Natural killer cell (primary cell): ENCODE measurements at regions of chr12 and their contacts with region 1.

Region 1: GRCh38 chr12:55996715-55997534 is at the start of gene SUOX:
- DNase-seq: peak; percentile 39 to 57
- ATAC-seq: peak; percentile 93
- H3K4me3 ChIP-seq: peak within 1 kb of the TSS; percentile 42
- H3K4me3 Mint-ChIP-seq: peak within 1 kb of the TSS; percentile 89
- H3K27ac ChIP-seq: peak within 1 kb of the TSS; percentile 15
- H3K27ac Mint-ChIP-seq: peak within 1 kb of the TSS; percentile 65 to 84
- H3K4me1 ChIP-seq: peaks cover 21% of the 10 kb centered on the region
- H3K4me1 Mint-ChIP-seq: peaks cover 14 to 20% of the 10 kb centered on the region in 2 donors
- H3K27me3 ChIP-seq: no peaks in the 10 kb centered on the region
- H3K27me3 Mint-ChIP-seq: no peaks in the 10 kb centered on the region
- CTCF ChIP-seq: no peak
- total RNA-seq, gene SUOX: 11.0 to 15.9 (median 14.6) TPM

Region 2: GRCh38 chr12:56029666-56030293 is 32.9 kb after region 1 on chr12:
- intact Hi-C with region 1: loop called (anchors 2 kb)
- DNase-seq: peak in 1 of 2 donors; percentile 73
- ATAC-seq: peak in 2 of 3 donors; percentile 44 to 69
- H3K4me3 ChIP-seq: no peak overlapping the region
- H3K4me3 Mint-ChIP-seq: no peak overlapping the region
- H3K27ac ChIP-seq: no peak overlapping the region
- H3K27ac Mint-ChIP-seq: no peak overlapping the region
- H3K4me1 ChIP-seq: peaks cover 4% of the 10 kb centered on the region
- H3K4me1 Mint-ChIP-seq: no peaks in the 10 kb centered on the region
- H3K27me3 ChIP-seq: no peaks in the 10 kb centered on the region
- H3K27me3 Mint-ChIP-seq: no peaks in the 10 kb centered on the region
- CTCF ChIP-seq: peak; percentile 32